ENCODE measurements at regions of chr19 and their contacts with region 1.

Region 1: GRCh38 chr19:18995804-18996241 is 37.5 kb downstream of the SUGP2 start:
- DNase-seq: peak; percentile 24 to 89 (median 82)
- H3K4me3 ChIP-seq: peak overlapping the region in 1 of 59 donors; percentile 3
- H3K27ac ChIP-seq: peak overlapping the region in 49 of 59 donors; percentile 14 to 80 (median 59)
- H3K27me3 ChIP-seq: no peaks in the 10 kb centered on the region
- CTCF ChIP-seq: peak in 54 of 56 donors; percentile 30 to 81 (median 68)

Region 2: DNA sequence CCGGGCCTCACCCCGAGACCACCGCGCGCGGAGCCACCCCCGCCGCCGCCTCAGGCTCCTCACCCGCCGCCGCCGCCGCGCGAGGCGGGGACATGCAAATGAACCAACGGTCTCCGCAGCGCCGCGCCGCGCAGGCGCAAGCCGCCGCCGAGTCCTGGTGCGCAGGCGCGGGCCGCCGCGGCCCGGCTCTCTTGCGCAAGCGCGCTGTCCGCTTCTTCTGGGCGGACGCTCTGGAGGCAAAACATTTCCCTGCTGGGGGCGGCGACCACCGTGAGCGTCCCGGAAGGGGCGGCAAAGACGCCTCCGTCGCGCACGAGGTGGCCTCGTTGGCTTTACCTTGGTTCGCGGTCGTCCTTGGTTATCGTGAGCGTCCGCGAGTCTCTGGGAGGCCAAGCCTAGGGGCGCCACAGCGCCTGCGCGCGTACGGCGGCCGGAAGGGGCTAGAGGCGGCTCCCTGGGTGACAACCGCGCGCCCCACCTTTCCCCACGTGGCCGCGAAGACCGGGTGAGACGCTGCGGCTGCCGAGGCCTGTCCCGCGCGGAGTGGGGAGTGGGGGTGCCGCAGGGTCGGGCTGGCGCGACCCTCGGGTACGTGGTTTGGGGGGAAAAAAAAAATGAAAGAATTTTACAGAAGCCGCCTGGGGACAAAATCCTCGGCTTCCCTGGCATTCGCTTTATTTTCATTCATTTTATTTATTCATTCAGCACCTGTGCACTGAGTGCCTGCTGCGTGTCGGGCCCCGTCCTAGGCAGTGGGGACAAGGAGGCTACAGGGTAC is 37.8 kb after region 1 on chr19 and contains the starts of genes ARMC6 and SUGP2:
- intact Hi-C with region 1: loop called in 1 of 2 experiments (anchors 5 kb)
- DNase-seq: peak; percentile 76 to 90 (median 82)
- H3K4me3 ChIP-seq: peak within 1 kb of the TSS; percentile 70 to 99 (median 90)
- H3K27ac ChIP-seq: peak within 1 kb of the TSS; percentile 87 to 100 (median 98)
- H3K27me3 ChIP-seq: no peaks in the 10 kb centered on the region
- CTCF ChIP-seq: peak in 26 of 56 donors; percentile 6 to 55 (median 24)
- total RNA-seq, gene ARMC6: 16.2 to 34.3 (median 24.2) TPM
- total RNA-seq, gene SUGP2: 143 to 254 (median 191) TPM

Region 3: GRCh38 chr19:19138169-19138981 is 142.6 kb after region 1 on chr19 and contains the start of gene TMEM161A:
- intact Hi-C with region 1: loop called in 1 of 2 experiments (anchors 5 kb)
- DNase-seq: peak; percentile 96 to 98 (median 98)
- H3K4me3 ChIP-seq: peak within 1 kb of the TSS; percentile 64 to 100 (median 91)
- H3K27ac ChIP-seq: peak within 1 kb of the TSS in 23 of 59 donors; percentile 5 to 83 (median 54)
- H3K27me3 ChIP-seq: no peaks in the 10 kb centered on the region
- CTCF ChIP-seq: peak in 31 of 56 donors; percentile 6 to 60 (median 27)
- total RNA-seq, gene TMEM161A: 14.9 to 46.0 (median 24.7) TPM

Region 4: DNA sequence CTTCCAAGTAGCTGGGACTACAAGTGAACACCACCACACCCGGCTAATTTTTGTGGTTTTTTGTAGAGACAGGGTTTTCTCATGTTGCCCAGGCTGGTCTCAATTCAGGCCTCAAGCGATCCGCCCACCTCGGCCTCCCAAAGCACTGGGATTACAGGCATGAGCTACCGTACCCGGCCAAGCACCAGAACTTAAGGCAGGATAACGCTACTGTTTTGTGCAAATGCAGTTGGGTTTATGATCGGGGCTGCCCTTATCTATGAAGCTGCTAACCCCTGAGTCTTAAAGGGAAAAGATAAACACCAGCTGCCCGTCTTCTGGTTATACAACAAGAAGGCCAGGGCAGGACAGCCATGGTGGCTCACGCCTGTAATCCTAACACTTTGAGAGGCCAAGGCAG is 289.9 kb after region 1 on chr19:
- intact Hi-C with region 1: no loop called
- DNase-seq: no peak
- H3K4me3 ChIP-seq: no peak overlapping the region
- H3K27ac ChIP-seq: no peak overlapping the region
- H3K27me3 ChIP-seq: no peaks in the 10 kb centered on the region
- CTCF ChIP-seq: no peak